Activated CD4-positive, alpha-beta memory T cell treated with anti-CD3 and anti-CD28 coated beads, Interleukin-2, amount 10 ng/mL, durations not matched to agents 7 days and 5 days (primary cell): ENCODE measurements at regions of chr12 and their contacts with region 1.

Region 1: GRCh38 chr12:58346032-58346632 is 404.8 kb downstream of the ATP23 start:
- DNase-seq: no peak
- H3K4me3 Mint-ChIP-seq: no peak overlapping the region
- H3K27ac Mint-ChIP-seq: no peak overlapping the region
- H3K4me1 Mint-ChIP-seq: no peaks in the 10 kb centered on the region
- H3K27me3 Mint-ChIP-seq: peaks cover 1% of the 10 kb centered on the region

Region 2: GRCh38 chr12:58325561-58325960 is 20.6 kb before region 1 on chr12:
- CTCF ChIA-PET with region 1: no interaction called
- POLR2A ChIA-PET with region 1: no interaction called
- DNase-seq: no peak
- H3K4me3 Mint-ChIP-seq: no peak overlapping the region
- H3K27ac Mint-ChIP-seq: no peak overlapping the region
- H3K4me1 Mint-ChIP-seq: no peaks in the 10 kb centered on the region
- H3K27me3 Mint-ChIP-seq: no peaks in the 10 kb centered on the region

Region 3: DNA sequence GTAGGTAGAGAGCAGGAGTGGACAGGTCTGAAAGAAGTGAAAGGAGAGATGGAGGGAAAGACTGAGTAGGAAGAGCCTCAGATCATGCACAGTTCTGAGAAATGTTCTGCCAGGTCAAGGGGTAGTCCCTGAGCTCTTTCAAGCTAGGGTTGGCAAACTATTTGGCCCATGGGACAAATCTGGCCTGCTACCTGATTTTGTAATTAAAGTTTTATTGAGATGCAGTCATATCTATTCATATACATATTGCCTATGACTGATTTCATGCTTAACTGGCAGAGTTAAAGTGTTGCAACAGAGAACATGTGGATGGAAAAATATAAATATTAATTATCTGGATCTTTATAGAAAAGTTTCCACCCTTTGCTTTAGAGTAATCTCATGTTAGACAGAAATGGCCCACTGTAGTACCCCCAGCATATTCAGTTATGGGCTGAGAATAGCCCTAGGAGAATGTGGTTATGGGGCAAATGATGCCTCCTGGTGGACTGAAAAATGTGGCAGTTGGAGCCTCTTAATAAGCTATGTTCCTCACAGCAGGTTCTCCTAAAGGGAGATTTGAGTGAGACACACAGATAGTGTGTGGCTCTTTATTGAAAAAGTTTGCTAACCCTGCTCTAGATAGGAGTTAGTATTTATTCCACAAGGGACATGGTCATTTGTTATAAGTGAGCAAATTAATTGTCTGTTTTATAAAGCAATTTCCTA is 97.3 kb after region 1 on chr12:
- CTCF ChIA-PET with region 1: interaction called, 20 read pairs
- POLR2A ChIA-PET with region 1: no interaction called
- DNase-seq: peak; percentile 30
- H3K4me3 Mint-ChIP-seq: no peak overlapping the region
- H3K27ac Mint-ChIP-seq: no peak overlapping the region
- H3K4me1 Mint-ChIP-seq: no peaks in the 10 kb centered on the region
- H3K27me3 Mint-ChIP-seq: peaks cover 13% of the 10 kb centered on the region